K562 (cell line): ENCODE measurements at regions of chr1 and their contacts with region 1.

Region 1: GRCh38 chr1:227357171-227357880 is 39.0 kb upstream of the CDC42BPA start:
- DNase-seq: peak; percentile 85 to 96 (median 90)
- ATAC-seq: peak; percentile 97
- H3K4me3 ChIP-seq: peak overlapping the region; percentile 13; the same call in 1 of the 2 replicates
- H3K27ac ChIP-seq: peak overlapping the region; percentile 93
- H3K4me1 ChIP-seq: peaks cover 20 to 29% of the 10 kb centered on the region in 2 experiments
- H3K27me3 ChIP-seq: no peaks in the 10 kb centered on the region
- CTCF ChIP-seq: no peak; a peak in 1 of 6 replicates
- EP300 ChIP-seq: peak; percentile 91
- POLR2A ChIP-seq: peak; percentile 46
- RAD21 ChIP-seq: peak; percentile 15 to 44

Region 2: DNA sequence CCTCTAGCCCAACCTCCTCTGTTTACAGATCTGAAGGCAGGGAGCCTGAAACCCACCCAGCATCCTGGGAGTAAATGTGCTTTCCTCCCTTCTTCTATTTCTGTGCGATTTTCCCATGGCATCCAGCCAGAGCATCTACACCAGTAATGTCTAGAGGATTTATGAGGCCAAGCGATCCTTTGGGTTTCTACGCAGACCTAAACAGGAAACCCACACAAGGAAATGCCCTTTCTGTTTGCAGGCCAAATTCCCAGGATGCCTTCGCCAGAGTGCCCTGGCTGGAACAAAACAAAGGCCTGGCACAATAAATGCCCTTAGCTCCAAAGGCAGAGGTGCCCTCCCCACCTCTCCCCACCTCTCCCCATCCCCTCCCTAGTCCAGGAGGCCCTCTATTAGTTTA is 71.5 kb after region 1 on chr1:
- CTCF ChIA-PET with region 1: no interaction called
- POLR2A ChIA-PET with region 1: no interaction called
- in situ Hi-C with region 1: no loop called
- intact Hi-C with region 1: loop called (anchors 1 kb)
- DNase-seq: no peak
- ATAC-seq: no peak
- H3K4me3 ChIP-seq: no peak overlapping the region
- H3K27ac ChIP-seq: no peak overlapping the region
- H3K4me1 ChIP-seq: peaks cover 22 to 34% of the 10 kb centered on the region in 2 experiments
- H3K27me3 ChIP-seq: no peaks in the 10 kb centered on the region
- CTCF ChIP-seq: no peak
- EP300 ChIP-seq: no peak
- POLR2A ChIP-seq: no peak
- RAD21 ChIP-seq: no peak

Region 3: GRCh38 chr1:227621211-227621610 is 263.9 kb after region 1 on chr1:
- CTCF ChIA-PET with region 1: no interaction called
- POLR2A ChIA-PET with region 1: no interaction called
- in situ Hi-C with region 1: no loop called
- intact Hi-C with region 1: no loop called
- DNase-seq: no peak
- ATAC-seq: no peak
- H3K4me3 ChIP-seq: no peak overlapping the region
- H3K27ac ChIP-seq: no peak overlapping the region
- H3K4me1 ChIP-seq: no peaks in the 10 kb centered on the region
- H3K27me3 ChIP-seq: no peaks in the 10 kb centered on the region
- CTCF ChIP-seq: no peak
- EP300 ChIP-seq: no peak
- POLR2A ChIP-seq: no peak
- RAD21 ChIP-seq: no peak